Activated naive CD4-positive, alpha-beta T cell treated with anti-CD3 and anti-CD28 coated beads for 36 hours (primary cell): ENCODE measurements at regions of chr3 and their contacts with region 1.

Region 1: DNA sequence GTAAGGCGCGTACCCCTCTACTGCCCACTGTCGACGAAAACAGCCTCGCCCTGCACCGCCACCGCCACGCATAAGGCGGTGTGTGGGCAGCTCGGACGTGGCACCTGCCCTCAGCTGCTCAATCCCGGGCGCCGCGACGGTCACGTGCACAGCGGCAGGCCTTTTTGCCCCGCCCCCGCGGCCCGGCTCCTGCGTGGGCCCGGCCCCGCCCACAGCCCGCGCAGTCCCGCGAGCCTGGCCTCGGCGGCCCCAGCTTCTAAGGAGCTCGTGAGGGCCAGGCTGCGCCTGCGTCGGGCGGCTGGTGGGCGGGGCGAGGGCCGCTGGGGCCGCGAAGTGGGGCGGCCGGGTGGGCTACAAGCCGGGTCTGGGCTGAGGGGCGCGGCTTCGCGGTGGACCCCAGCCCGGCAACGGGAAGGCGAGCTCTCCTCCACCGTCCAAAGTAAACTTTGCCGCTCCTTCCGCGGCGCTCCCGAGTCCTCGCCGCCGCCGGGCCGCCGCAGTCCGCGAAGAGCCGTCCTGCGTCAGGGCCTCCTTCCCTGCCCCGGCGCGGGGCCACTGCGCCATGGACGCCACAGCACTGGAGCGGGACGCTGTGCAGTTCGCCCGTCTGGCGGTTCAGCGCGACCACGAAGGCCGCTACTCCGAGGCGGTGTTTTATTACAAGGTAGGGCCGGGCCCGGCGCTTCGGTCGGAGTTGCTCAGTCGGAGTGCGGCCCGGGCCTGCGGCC is at the start of gene CAPN7:
- DNase-seq: peak; percentile 92
- H3K4me3 Mint-ChIP-seq: peak within 1 kb of the TSS; percentile 82
- H3K27ac Mint-ChIP-seq: peak within 1 kb of the TSS; percentile 77
- H3K4me1 Mint-ChIP-seq: peaks cover 23% of the 10 kb centered on the region
- H3K27me3 Mint-ChIP-seq: no peaks in the 10 kb centered on the region
- total RNA-seq, gene CAPN7: 23.7 to 26.1 TPM

Region 2: DNA sequence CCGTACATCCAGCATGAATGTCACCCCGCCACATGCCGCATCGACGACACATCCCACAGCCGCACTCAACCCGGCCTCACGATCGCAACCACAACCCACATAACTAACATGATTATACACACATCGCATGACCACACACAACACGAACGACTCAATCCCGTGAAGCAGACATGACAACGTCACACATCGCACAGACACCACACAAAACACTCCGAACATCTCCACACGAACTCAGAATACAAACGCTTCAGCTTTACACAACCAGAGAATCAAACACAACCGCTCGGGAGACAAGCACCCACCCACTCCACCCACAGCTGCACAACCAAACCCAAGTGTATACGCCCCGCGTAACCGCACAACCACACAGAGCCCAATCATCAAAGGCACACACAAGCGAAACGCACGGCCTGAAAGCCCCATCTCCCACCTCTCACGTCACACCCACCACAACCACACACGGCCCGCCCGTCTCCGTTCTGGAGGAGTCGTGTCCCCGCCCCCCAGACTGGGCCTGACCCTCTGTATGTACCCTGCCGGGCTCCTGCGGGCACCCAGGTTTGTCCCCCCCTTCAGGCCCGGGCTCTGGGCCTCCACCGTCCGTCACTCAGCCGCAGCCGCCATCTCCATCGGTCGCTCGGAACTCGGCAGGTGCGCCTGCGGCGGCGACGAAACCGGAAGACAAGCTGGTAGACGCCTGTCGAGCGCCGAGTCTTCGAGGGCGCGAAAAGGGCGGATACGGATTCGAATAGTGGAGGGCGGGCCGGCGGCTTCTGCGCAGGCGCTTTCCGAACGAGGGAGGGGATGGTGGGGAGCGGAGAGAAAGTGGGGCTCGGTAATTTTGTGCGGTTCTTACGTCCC is 107.4 kb before region 1 on chr3 and contains the start of gene RBSN:
- CTCF ChIA-PET with region 1: interaction called, 3 read pairs
- intact Hi-C with region 1: loop called (anchors 1 kb)
- DNase-seq: peak; percentile 97
- H3K4me3 Mint-ChIP-seq: peak within 1 kb of the TSS; percentile 90
- H3K27ac Mint-ChIP-seq: peak within 1 kb of the TSS; percentile 83
- H3K4me1 Mint-ChIP-seq: peaks cover 10% of the 10 kb centered on the region
- H3K27me3 Mint-ChIP-seq: no peaks in the 10 kb centered on the region
- total RNA-seq, gene RBSN: 15.3 to 15.8 TPM

Region 3: DNA sequence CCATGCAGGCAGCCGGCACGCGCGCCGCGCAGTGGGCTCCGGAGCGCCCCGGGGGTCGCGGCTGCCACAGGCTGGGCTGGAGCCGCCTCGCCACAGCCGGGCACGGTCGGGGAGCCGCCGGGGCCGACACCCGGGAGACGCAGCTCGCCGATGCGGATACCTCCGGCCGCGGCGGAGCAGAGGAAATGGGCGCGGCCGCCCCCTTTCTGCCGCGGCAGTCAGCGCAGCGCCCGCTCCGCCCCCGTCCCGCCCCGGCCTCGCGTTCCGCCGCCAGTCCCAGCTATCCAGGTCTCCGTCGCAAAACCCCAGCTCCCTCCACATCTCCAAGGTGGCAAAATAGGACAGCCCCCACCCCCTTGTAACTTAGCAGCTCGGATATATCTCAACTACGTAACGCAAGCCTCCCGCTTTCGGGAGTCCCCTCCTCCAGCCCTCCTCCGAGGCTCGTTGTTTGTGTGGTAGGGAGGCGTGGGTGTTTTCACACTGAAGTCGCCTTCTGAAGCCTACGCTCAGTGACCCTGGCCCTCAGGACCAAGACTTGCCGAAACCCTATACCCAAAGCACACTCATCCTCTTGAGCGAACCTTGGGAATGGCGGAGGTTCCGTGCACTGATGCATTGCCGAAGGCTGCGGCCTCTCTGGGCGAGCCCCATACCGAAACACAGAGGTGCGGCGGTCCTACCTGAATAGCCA is 126.5 kb after region 1 on chr3 and contains the start of gene SH3BP5:
- CTCF ChIA-PET with region 1: interaction called, 4 read pairs
- intact Hi-C with region 1: loop called (anchors 1 kb)
- DNase-seq: peak; percentile 74
- H3K4me3 Mint-ChIP-seq: peak within 1 kb of the TSS; percentile 89
- H3K27ac Mint-ChIP-seq: peak within 1 kb of the TSS; percentile 57
- H3K4me1 Mint-ChIP-seq: peaks cover 50% of the 10 kb centered on the region
- H3K27me3 Mint-ChIP-seq: peaks cover 2% of the 10 kb centered on the region
- total RNA-seq, gene SH3BP5: 7.9 to 9.0 TPM

Region 4: GRCh38 chr3:15427182-15427880 is 221.2 kb after region 1 on chr3 and contains the starts of genes EAF1 and METTL6:
- CTCF ChIA-PET with region 1: interaction called, 5 read pairs
- intact Hi-C with region 1: loop called (anchors 1 kb)
- DNase-seq: peak; percentile 92
- H3K4me3 Mint-ChIP-seq: peak within 1 kb of the TSS; percentile 90
- H3K27ac Mint-ChIP-seq: peak within 1 kb of the TSS; percentile 91
- H3K4me1 Mint-ChIP-seq: peaks cover 41% of the 10 kb centered on the region
- H3K27me3 Mint-ChIP-seq: no peaks in the 10 kb centered on the region
- total RNA-seq, gene EAF1: 19.5 to 20.6 TPM
- total RNA-seq, gene METTL6: 12.5 to 14.0 TPM

Region 5: GRCh38 chr3:15815696-15816095 is 609.6 kb after region 1 on chr3:
- CTCF ChIA-PET with region 1: no interaction called
- intact Hi-C with region 1: loop called (anchors 2 kb)
- DNase-seq: no peak
- H3K4me3 Mint-ChIP-seq: no peak overlapping the region
- H3K27ac Mint-ChIP-seq: no peak overlapping the region
- H3K4me1 Mint-ChIP-seq: peaks cover 42% of the 10 kb centered on the region
- H3K27me3 Mint-ChIP-seq: no peaks in the 10 kb centered on the region

Region 6: DNA sequence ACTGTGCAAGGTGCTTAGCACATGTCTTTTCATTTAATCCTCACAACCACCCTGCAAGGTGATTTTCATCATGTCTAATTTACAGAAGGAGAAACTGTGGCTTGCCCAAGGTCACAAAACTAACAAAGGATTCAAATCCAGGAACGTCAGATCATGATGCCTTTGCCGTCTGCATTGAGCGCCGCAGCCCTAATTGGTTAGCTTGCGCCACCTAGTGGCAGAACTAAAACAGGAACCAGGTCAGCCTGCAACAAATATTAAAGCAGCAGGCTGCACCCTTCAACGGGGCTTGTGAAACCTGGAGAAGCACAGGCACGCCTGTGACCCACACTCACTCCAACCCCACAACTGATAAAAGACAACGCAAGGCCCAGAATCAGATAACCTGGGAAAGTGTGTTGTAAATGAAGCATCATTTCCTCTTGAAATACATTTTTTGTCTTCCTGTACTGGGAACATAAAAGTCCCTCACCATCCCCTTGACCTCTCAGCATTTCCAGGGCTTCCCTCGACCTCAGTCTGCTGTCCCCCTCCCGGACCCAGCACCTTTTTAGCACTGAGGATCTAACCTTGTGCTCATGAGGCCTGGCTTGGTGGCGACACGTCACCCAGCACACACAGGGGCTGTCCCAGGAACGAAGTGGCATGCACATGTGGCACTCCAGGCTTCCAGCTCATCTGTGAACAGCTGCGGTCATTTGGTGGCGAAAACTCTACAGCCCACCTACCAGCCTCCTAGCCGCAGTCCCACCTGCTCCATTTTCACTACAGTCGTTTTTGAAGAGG is 1041.4 kb after region 1 on chr3:
- CTCF ChIA-PET with region 1: interaction called, 4 read pairs
- intact Hi-C with region 1: loop called (anchors 1 kb)
- DNase-seq: peak; percentile 89
- H3K4me3 Mint-ChIP-seq: no peak overlapping the region
- H3K27ac Mint-ChIP-seq: no peak overlapping the region
- H3K4me1 Mint-ChIP-seq: peaks cover 4% of the 10 kb centered on the region
- H3K27me3 Mint-ChIP-seq: no peaks in the 10 kb centered on the region